Heart left ventricle (tissue), 16 donors: ENCODE measurements at regions of chr7 and their contacts with region 1.

Region 1: GRCh38 chr7:22356701-22357353 is at the start of gene RAPGEF5:
- DNase-seq: no peak
- ATAC-seq: peak in 3 of 4 donors; percentile 18 to 50 (median 35)
- H3K4me3 ChIP-seq: peak within 1 kb of the TSS in 11 of 12 donors; percentile 34 to 65 (median 54)
- H3K27ac ChIP-seq: peak within 1 kb of the TSS in 3 of 12 donors; percentile 44 to 55 (median 49)
- H3K4me1 ChIP-seq: peaks cover 0 to 20% (median 4%) of the 10 kb centered on the region in 12 donors
- H3K27me3 ChIP-seq: peaks cover 0 to 24% (median 9%) of the 10 kb centered on the region in 9 donors
- CTCF ChIP-seq: peak in 1 of 12 donors; percentile 9
- POLR2A ChIP-seq: no peak
- total RNA-seq, gene RAPGEF5: 10.6 to 37.9 (median 15.5) TPM

Region 2: DNA sequence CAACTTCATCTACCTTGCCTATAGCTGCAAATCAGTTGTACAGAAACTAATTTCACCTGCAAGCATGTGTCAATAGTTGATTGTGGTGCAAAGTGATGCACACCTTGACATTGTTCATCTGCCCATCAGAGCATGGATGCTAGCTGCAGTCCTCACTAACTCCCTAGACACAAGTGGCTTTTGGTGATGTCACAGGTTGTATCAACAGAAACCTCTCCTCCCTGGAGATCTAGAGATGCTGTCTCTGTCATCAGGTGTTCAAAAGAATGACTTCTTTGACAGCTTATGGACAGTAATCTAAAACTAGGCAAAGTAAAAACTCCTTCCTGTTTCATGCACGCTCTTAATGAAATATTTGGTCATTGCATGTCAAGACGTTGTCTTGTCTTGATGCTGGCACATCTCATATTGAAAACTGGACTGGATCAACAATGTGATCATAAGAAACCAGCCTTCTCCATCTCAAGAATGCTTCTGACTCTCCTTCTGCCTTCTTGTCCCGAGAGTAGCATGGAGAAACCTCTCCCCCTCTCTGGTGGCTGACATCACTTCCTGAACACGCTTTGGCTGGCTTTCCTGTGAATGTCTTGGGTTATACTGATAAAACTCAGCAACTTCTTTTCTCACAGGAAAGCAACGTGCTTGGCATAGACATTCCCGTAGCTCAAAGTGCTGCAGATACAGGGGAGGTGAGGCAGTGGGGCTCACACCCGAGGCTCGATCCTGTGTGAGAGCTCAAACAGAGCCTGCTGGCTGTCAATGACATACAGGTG is 234.9 kb before region 1 on chr7:
- intact Hi-C with region 1: loop called in 1 of 10 experiments (anchors 10 kb)
- DNase-seq: peak in 4 of 5 donors; percentile 35 to 61 (median 48)
- ATAC-seq: peak; percentile 61 to 78 (median 72)
- H3K4me3 ChIP-seq: no peak overlapping the region
- H3K27ac ChIP-seq: peak overlapping the region; percentile 19 to 81 (median 58)
- H3K4me1 ChIP-seq: peaks cover 0 to 35% (median 19%) of the 10 kb centered on the region in 12 donors
- H3K27me3 ChIP-seq: no peaks in the 10 kb centered on the region
- CTCF ChIP-seq: no peak
- POLR2A ChIP-seq: no peak

Region 3: GRCh38 chr7:22406715-22407114 is 49.9 kb after region 1 on chr7:
- intact Hi-C with region 1: loop called in 1 of 10 experiments (anchors 5 kb)
- DNase-seq: no peak
- ATAC-seq: no peak
- H3K4me3 ChIP-seq: no peak overlapping the region
- H3K27ac ChIP-seq: no peak overlapping the region
- H3K4me1 ChIP-seq: peaks cover 0 to 4% (median 0%) of the 10 kb centered on the region in 12 donors
- H3K27me3 ChIP-seq: no peaks in the 10 kb centered on the region
- CTCF ChIP-seq: no peak
- POLR2A ChIP-seq: no peak

Region 4: GRCh38 chr7:22426463-22427121 is 69.8 kb after region 1 on chr7:
- intact Hi-C with region 1: loop called in 1 of 10 experiments (anchors 5 kb)
- DNase-seq: no peak
- ATAC-seq: no peak
- H3K4me3 ChIP-seq: no peak overlapping the region
- H3K27ac ChIP-seq: no peak overlapping the region
- H3K4me1 ChIP-seq: peaks cover 0 to 2% (median 0%) of the 10 kb centered on the region in 12 donors
- H3K27me3 ChIP-seq: no peaks in the 10 kb centered on the region
- CTCF ChIP-seq: no peak
- POLR2A ChIP-seq: no peak

Region 5: GRCh38 chr7:22445140-22445743 is 88.4 kb after region 1 on chr7:
- intact Hi-C with region 1: loop called in 2 of 10 experiments (anchors 5 to 10 kb)
- DNase-seq: peak; percentile 83 to 88 (median 88)
- ATAC-seq: peak; percentile 93 to 99 (median 96)
- H3K4me3 ChIP-seq: peak overlapping the region in 4 of 12 donors; percentile 5 to 19 (median 6)
- H3K27ac ChIP-seq: peak overlapping the region; percentile 34 to 87 (median 71)
- H3K4me1 ChIP-seq: peaks cover 3 to 36% (median 27%) of the 10 kb centered on the region in 12 donors
- H3K27me3 ChIP-seq: no peaks in the 10 kb centered on the region
- CTCF ChIP-seq: no peak
- POLR2A ChIP-seq: no peak

Region 6: DNA sequence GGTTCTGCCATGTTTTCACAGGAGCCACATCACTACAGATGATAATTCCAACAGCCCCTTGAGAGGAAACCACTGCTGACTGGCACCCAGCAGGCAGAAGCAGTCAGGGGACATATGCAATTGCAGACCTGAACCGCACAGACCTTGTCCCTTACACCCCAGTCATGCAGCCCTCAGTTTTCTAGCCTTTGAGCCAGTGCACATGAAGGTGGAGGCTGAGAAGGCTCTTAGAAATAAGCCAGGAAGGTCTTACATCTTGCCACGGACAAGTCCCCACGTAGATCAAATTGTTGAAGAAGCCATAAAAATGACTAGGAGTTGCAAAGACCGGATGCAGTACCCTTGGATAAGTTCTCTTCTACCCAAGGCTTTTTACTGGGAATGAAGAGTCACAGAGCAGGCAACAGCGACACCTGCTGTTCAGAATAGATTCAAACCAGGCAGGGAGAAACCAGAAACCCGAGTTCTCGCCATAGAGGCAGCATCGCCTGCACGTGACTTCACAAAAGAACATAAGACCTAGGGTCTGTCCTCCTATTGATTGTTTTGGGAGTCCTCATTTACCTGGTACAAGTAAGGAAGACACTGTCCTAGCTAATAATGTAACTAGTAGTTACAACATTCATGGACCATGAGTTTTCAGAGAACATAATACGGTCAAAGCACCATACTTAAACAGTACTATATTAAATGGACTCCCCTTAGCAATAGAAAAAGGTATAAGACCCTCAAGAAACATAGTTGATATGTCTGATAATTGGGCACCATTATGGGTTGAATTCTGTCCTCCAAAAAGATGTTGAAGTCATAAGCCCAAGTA is 132.0 kb after region 1 on chr7:
- intact Hi-C with region 1: loop called in 2 of 10 experiments (anchors 5 to 10 kb)
- DNase-seq: peak in 4 of 5 donors; percentile 54 to 63 (median 59)
- ATAC-seq: peak in 3 of 4 donors; percentile 80 to 87 (median 85)
- H3K4me3 ChIP-seq: no peak overlapping the region
- H3K27ac ChIP-seq: no peak overlapping the region
- H3K4me1 ChIP-seq: peaks cover 0 to 7% (median 1%) of the 10 kb centered on the region in 12 donors
- H3K27me3 ChIP-seq: peaks cover 0 to 4% (median 0%) of the 10 kb centered on the region in 9 donors
- CTCF ChIP-seq: peak; percentile 84 to 96 (median 88)
- POLR2A ChIP-seq: no peak